MCF 10A (cell line): ENCODE measurements at regions of chr1 and their contacts with region 1.

Region 1: GRCh38 chr1:27392096-27392777 is at the start of gene GPR3:
- DNase-seq: peak; percentile 90
- H3K4me3 Mint-ChIP-seq: peak within 1 kb of the TSS; percentile 72
- H3K27ac Mint-ChIP-seq: peak within 1 kb of the TSS; percentile 53
- H3K4me1 Mint-ChIP-seq: peaks cover 18% of the 10 kb centered on the region
- H3K27me3 Mint-ChIP-seq: no peaks in the 10 kb centered on the region
- CTCF ChIP-seq: peak; percentile 53
- total RNA-seq, gene GPR3: 0.47 and 0.65 TPM in 2 replicates

Region 2: DNA sequence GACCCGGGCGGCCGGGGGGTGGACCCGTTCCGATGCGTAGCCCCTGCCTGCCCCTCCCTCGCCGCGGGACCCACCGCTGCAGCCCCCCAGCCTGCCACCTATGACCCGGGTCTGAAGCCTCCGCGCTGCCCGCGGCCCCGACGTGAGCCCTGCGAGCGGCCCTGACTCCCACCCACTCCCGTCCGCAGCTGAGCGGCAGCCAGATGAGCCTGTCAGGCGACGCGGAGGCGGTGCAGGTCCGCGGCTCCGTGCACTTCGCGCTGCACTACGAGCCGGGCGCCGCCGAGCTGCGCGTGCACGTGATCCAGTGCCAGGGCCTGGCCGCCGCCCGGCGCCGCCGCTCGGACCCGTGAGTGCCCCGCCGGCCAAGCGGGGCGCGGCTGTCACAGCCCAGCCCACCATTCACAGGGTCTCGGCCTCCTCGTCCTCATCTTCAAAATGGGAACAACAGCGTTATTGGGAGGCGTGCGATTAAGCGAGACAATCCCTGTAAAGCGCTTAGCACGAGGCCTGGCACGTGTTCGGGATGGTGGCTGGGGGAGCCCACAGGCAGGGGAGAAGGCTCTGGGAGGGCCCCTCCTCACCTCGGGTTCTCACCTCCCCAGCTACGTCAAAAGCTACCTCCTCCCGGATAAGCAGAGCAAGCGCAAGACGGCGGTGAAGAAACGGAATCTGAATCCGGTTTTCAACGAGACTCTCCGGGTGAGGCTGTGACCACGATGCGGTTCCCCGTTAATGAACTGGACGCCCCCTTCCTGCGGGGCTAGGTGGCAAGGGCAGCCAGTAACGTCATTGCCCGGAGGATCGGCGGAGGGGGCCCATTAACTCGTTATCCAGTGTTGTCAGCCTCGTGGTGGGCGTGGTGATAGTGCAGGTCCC is 42.2 kb before region 1 on chr1:
- CTCF ChIA-PET with region 1: interaction called, 12 read pairs
- POLR2A ChIA-PET with region 1: no interaction called
- intact Hi-C with region 1: no loop called
- DNase-seq: no peak
- H3K4me3 Mint-ChIP-seq: no peak overlapping the region
- H3K27ac Mint-ChIP-seq: no peak overlapping the region
- H3K4me1 Mint-ChIP-seq: peaks cover 19% of the 10 kb centered on the region
- H3K27me3 Mint-ChIP-seq: no peaks in the 10 kb centered on the region
- CTCF ChIP-seq: no peak

Region 3: GRCh38 chr1:27365372-27366112 is 26.7 kb before region 1 on chr1:
- CTCF ChIA-PET with region 1: interaction called, 27 read pairs
- POLR2A ChIA-PET with region 1: interaction called, 23 read pairs
- intact Hi-C with region 1: loop called (anchors 2 kb)
- DNase-seq: peak; percentile 89
- H3K4me3 Mint-ChIP-seq: peak overlapping the region; percentile 85
- H3K27ac Mint-ChIP-seq: peak overlapping the region; percentile 96
- H3K4me1 Mint-ChIP-seq: peaks cover 12% of the 10 kb centered on the region
- H3K27me3 Mint-ChIP-seq: no peaks in the 10 kb centered on the region
- CTCF ChIP-seq: no peak

Region 4: GRCh38 chr1:27416387-27417111 is 24.3 kb after region 1 on chr1:
- CTCF ChIA-PET with region 1: interaction called, 12 read pairs
- POLR2A ChIA-PET with region 1: interaction called, 4 read pairs
- intact Hi-C with region 1: no loop called
- DNase-seq: peak; percentile 73
- H3K4me3 Mint-ChIP-seq: no peak overlapping the region
- H3K27ac Mint-ChIP-seq: peak overlapping the region; percentile 19
- H3K4me1 Mint-ChIP-seq: peaks cover 12% of the 10 kb centered on the region
- H3K27me3 Mint-ChIP-seq: no peaks in the 10 kb centered on the region
- CTCF ChIP-seq: peak; percentile 58

Region 5: GRCh38 chr1:27562534-27563340 is 170.5 kb after region 1 on chr1:
- CTCF ChIA-PET with region 1: no interaction called
- POLR2A ChIA-PET with region 1: no interaction called
- intact Hi-C with region 1: no loop called
- DNase-seq: no peak
- H3K4me3 Mint-ChIP-seq: no peak overlapping the region
- H3K27ac Mint-ChIP-seq: no peak overlapping the region
- H3K4me1 Mint-ChIP-seq: peaks cover 43% of the 10 kb centered on the region
- H3K27me3 Mint-ChIP-seq: no peaks in the 10 kb centered on the region
- CTCF ChIP-seq: no peak